ENCODE measurements at regions of chr16 and their contacts with region 1.

Region 1: DNA sequence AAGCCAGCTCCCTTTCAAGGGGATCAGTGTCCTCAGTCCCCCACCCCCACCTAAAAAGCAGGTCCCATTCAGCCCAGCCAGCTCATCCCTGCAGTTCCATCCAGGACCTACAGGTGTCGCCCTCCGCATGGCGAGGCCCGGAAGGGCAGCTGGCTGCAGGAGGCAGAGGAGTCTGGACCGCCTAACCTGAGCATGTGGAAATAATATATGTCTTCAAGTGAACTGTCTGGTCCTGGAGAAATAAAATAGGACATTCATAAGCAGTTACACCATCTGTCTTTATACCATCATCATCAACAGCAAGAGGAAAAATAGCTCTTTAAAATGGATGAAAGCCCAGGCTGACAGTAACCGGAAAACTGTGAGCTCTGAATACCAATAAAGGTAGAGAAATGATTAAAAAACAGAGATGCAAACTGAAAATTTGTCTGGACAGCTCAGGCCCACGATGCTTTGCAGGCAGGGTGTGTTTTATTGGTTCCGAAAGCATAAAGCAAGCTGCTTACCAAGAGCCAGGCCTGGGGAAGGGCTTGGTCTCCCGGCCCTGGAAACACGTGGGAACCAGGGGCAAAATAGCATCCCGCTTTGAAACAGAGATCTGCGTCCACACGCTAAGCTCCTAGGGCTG is 215.2 kb downstream of the ZFHX3 start:
- DNase-seq: peak; percentile 82 to 95
- ATAC-seq: peak; percentile 95
- H3K4me3 ChIP-seq: no peak overlapping the region
- H3K27ac ChIP-seq: peak overlapping the region in 1 of 2 donors; percentile 64
- H3K4me1 ChIP-seq: peaks cover 0 to 3% of the 10 kb centered on the region in 2 donors
- H3K27me3 ChIP-seq: no peaks in the 10 kb centered on the region

Region 2: DNA sequence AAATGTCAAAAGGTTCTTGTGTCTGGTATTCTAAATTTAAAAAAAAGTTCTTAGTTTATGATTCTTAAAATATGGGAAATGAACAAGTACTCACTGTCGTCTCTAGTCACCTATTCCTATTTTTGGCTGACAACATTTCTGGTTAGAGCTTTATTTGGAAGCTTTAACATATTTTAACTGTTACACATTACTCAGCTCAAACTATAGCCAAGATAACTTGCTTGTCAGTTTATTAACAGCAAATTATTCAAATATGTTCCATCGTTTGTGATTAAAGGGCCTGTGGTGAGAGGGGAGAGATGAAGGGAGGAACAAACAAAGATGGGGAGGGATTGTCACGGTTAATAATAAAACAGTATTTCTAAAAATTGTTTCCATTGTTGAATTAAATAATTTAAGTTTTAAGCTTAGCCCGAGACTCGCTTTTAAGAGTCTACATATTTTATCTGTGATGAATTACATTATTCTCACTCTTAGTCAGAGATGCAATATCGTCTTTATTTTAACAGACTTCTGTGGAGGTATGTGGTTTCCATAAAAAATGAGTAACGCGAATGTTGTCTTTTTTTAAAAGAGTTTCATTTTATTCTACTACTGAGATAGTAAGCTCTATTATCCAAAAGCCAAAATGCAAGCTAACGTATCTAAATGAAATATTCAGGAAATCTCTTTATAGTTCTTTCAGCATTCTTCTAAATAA is 338.9 kb before region 1 on chr16:
- intact Hi-C with region 1: loop called in 1 of 2 experiments (anchors 10 kb)
- DNase-seq: no peak
- ATAC-seq: no peak
- H3K4me3 ChIP-seq: no peak overlapping the region
- H3K27ac ChIP-seq: no peak overlapping the region
- H3K4me1 ChIP-seq: no peaks in the 10 kb centered on the region
- H3K27me3 ChIP-seq: no peaks in the 10 kb centered on the region

Region 3: GRCh38 chr16:72947379-72948237 is 114.9 kb after region 1 on chr16:
- intact Hi-C with region 1: loop called in 1 of 2 experiments (anchors 5 kb)
- DNase-seq: peak in 1 of 2 donors; percentile 74
- ATAC-seq: peak; percentile 33
- H3K4me3 ChIP-seq: no peak overlapping the region
- H3K27ac ChIP-seq: no peak overlapping the region
- H3K4me1 ChIP-seq: peaks cover 0 to 2% of the 10 kb centered on the region in 2 donors
- H3K27me3 ChIP-seq: no peaks in the 10 kb centered on the region

Region 4: GRCh38 chr16:73047518-73048291 is 215.0 kb after region 1 on chr16 and contains the start of gene ZFHX3:
- intact Hi-C with region 1: loop called in 1 of 2 experiments (anchors 5 kb)
- DNase-seq: peak; percentile 85 to 90
- ATAC-seq: peak; percentile 65
- H3K4me3 ChIP-seq: peak within 1 kb of the TSS; percentile 79 to 96
- H3K27ac ChIP-seq: peak within 1 kb of the TSS; percentile 100
- H3K4me1 ChIP-seq: peaks cover 6 to 9% of the 10 kb centered on the region in 2 donors
- H3K27me3 ChIP-seq: no peaks in the 10 kb centered on the region
- total RNA-seq, gene ZFHX3: 67.4 to 96.9 TPM

Region 5: GRCh38 chr16:73196670-73197069 is 363.9 kb after region 1 on chr16:
- intact Hi-C with region 1: loop called (anchors 5 to 10 kb)
- DNase-seq: peak; percentile 77 to 85
- ATAC-seq: peak; percentile 89
- H3K4me3 ChIP-seq: no peak overlapping the region
- H3K27ac ChIP-seq: no peak overlapping the region
- H3K4me1 ChIP-seq: no peaks in the 10 kb centered on the region
- H3K27me3 ChIP-seq: no peaks in the 10 kb centered on the region

Measured in aorta (tissue), 5 donors.